ENCODE measurements at regions of chr15 and their contacts with region 1.

Region 1: GRCh38 chr15:64893481-64894394 is 18.0 kb upstream of the ANKDD1A start:
- DNase-seq: peak; percentile 63
- H3K4me3 ChIP-seq: no peak overlapping the region
- CTCF ChIP-seq: no peak

Region 2: GRCh38 chr15:64883100-64883581 is 10.6 kb before region 1 on chr15:
- CTCF ChIA-PET with region 1: interaction called, 10 read pairs
- POLR2A ChIA-PET with region 1: interaction called, 3 read pairs
- DNase-seq: no peak
- H3K4me3 ChIP-seq: no peak overlapping the region
- CTCF ChIP-seq: no peak

Region 3: DNA sequence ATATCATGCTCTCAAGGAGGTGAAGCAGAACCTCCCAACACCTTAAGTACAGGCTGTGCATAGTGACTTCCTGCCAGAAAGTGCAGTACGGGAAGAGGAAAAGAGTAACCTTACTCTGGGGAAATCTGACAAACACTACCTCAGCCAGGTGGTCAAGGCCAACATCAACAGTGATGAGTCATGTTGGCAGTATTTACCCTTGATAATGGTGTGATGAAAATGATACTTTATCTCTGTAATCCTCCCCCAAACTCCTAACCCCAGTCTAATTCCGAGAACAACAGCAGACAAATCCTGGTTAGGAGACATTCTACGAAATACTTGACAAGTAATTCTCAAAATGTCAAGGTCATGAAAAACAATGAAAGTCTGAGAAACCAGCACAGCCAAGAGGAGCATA is 44.5 kb after region 1 on chr15:
- CTCF ChIA-PET with region 1: no interaction called
- POLR2A ChIA-PET with region 1: no interaction called
- DNase-seq: no peak
- H3K4me3 ChIP-seq: no peak overlapping the region
- CTCF ChIP-seq: no peak

Measured in AG04449 (cell line).